Activated CD4-positive, alpha-beta T cell treated with anti-CD3 and anti-CD28 coated beads for 36 hours (primary cell): ENCODE measurements at regions of chr9 and their contacts with region 1.

Region 1: GRCh38 chr9:6055213-6055612 is 39.8 kb upstream of the RANBP6 start:
- DNase-seq: peak; percentile 52
- ATAC-seq: peak; percentile 65
- H3K4me3 Mint-ChIP-seq: no peak overlapping the region
- H3K27ac Mint-ChIP-seq: no peak overlapping the region
- H3K4me1 Mint-ChIP-seq: peaks cover 2% of the 10 kb centered on the region
- H3K27me3 Mint-ChIP-seq: peaks cover 4% of the 10 kb centered on the region

Region 2: DNA sequence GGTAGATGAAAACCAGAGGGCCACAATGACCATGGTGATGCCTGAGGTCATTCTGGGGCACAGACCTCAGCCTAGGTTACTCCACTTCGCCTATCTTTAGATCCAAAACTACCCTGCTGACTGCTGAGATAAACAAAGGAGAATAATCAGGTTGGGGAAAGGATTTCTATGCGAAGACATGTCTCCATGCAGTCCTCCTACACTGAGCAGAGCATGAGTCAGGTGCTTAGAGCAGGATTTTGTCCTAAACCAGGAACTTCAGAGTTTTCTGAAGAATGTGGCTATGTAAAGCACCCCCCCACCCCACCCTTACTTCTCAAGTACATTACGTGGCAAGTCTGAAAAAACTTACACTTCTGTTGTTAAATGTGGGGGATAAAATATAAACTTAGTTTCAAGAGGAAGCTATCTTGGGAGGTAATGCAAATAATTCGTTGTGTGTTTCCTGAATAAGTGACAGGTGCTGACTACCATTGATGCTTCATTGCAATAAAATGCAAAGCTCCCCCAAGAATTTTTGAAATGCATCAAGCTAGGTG is 525.5 kb before region 1 on chr9:
- CTCF ChIA-PET with region 1: no interaction called
- POLR2A ChIA-PET with region 1: no interaction called
- intact Hi-C with region 1: no loop called
- DNase-seq: no peak
- ATAC-seq: no peak
- H3K4me3 Mint-ChIP-seq: no peak overlapping the region
- H3K27ac Mint-ChIP-seq: peak overlapping the region; percentile 12
- H3K4me1 Mint-ChIP-seq: peaks cover 45% of the 10 kb centered on the region
- H3K27me3 Mint-ChIP-seq: no peaks in the 10 kb centered on the region

Region 3: GRCh38 chr9:5886114-5886939 is 168.9 kb before region 1 on chr9:
- CTCF ChIA-PET with region 1: interaction called, 49 read pairs
- POLR2A ChIA-PET with region 1: no interaction called
- intact Hi-C with region 1: loop called (anchors 1 kb)
- DNase-seq: peak; percentile 92
- ATAC-seq: peak; percentile 100
- H3K4me3 Mint-ChIP-seq: no peak overlapping the region
- H3K27ac Mint-ChIP-seq: no peak overlapping the region
- H3K4me1 Mint-ChIP-seq: peaks cover 5% of the 10 kb centered on the region
- H3K27me3 Mint-ChIP-seq: no peaks in the 10 kb centered on the region

Region 4: DNA sequence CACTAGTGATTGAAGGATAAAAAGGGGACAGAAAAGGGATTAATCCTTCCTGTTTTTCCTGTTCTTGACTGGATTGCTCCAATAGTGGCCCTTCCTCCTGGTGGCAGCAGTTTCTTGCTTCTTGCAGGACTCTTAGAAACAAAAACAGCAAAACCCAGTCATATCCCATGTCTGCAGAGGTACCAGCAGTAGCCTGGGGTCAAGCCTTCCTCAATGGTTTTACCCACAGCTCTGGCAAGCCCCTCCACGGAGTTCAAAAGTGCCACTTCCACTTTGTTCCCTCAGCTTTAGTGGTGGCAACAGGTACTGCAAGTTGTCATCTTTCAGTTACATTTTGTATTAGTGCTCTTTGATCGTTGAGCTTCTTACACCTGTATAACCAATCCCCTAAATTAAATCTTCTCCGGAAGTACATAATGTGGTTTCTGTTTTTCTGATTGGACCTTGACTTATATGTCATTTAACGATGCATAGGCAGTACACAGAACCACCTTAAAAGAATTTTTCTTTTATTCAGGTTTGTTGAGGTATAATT is 31.1 kb before region 1 on chr9:
- CTCF ChIA-PET with region 1: interaction called, 13 read pairs
- POLR2A ChIA-PET with region 1: no interaction called
- intact Hi-C with region 1: no loop called
- DNase-seq: peak; percentile 28
- ATAC-seq: peak; percentile 39
- H3K4me3 Mint-ChIP-seq: no peak overlapping the region
- H3K27ac Mint-ChIP-seq: no peak overlapping the region
- H3K4me1 Mint-ChIP-seq: no peaks in the 10 kb centered on the region
- H3K27me3 Mint-ChIP-seq: peaks cover 10% of the 10 kb centered on the region

Region 5: GRCh38 chr9:6305954-6306563 is 250.8 kb after region 1 on chr9:
- CTCF ChIA-PET with region 1: interaction called, 32 read pairs
- POLR2A ChIA-PET with region 1: no interaction called
- intact Hi-C with region 1: loop called (anchors 1 kb)
- DNase-seq: no peak
- ATAC-seq: no peak
- H3K4me3 Mint-ChIP-seq: no peak overlapping the region
- H3K27ac Mint-ChIP-seq: no peak overlapping the region
- H3K4me1 Mint-ChIP-seq: no peaks in the 10 kb centered on the region
- H3K27me3 Mint-ChIP-seq: peaks cover 13% of the 10 kb centered on the region